Heart left ventricle (tissue), 16 donors: ENCODE measurements at regions of chr1 and their contacts with region 1.

Region 1: GRCh38 chr1:236603991-236604904 is at the start of gene HEATR1:
- DNase-seq: peak; percentile 95 to 96 (median 95)
- ATAC-seq: peak; percentile 93 to 99 (median 98)
- H3K4me3 ChIP-seq: peak within 1 kb of the TSS; percentile 50 to 96 (median 80)
- H3K27ac ChIP-seq: peak within 1 kb of the TSS in 11 of 12 donors; percentile 71 to 90 (median 85)
- H3K4me1 ChIP-seq: peaks cover 0 to 23% (median 13%) of the 10 kb centered on the region in 12 donors
- H3K27me3 ChIP-seq: no peaks in the 10 kb centered on the region
- CTCF ChIP-seq: no peak
- POLR2A ChIP-seq: peak in 1 of 2 donors; percentile 55
- total RNA-seq, gene HEATR1: 6.6 to 17.2 (median 11.8) TPM

Region 2: GRCh38 chr1:236795035-236795756 is 190.9 kb after region 1 on chr1 and contains the start of gene MTR:
- intact Hi-C with region 1: loop called in 6 of 10 experiments (anchors 5 to 10 kb)
- DNase-seq: peak; percentile 98 to 99 (median 98)
- ATAC-seq: peak; percentile 99
- H3K4me3 ChIP-seq: peak within 1 kb of the TSS; percentile 71 to 99 (median 84)
- H3K27ac ChIP-seq: peak within 1 kb of the TSS; percentile 67 to 97 (median 92)
- H3K4me1 ChIP-seq: peaks cover 0 to 38% (median 24%) of the 10 kb centered on the region in 12 donors
- H3K27me3 ChIP-seq: no peaks in the 10 kb centered on the region
- CTCF ChIP-seq: no peak
- POLR2A ChIP-seq: peak; percentile 88 to 96
- total RNA-seq, gene MTR: 30.8 to 84.2 (median 51.4) TPM

Region 3: DNA sequence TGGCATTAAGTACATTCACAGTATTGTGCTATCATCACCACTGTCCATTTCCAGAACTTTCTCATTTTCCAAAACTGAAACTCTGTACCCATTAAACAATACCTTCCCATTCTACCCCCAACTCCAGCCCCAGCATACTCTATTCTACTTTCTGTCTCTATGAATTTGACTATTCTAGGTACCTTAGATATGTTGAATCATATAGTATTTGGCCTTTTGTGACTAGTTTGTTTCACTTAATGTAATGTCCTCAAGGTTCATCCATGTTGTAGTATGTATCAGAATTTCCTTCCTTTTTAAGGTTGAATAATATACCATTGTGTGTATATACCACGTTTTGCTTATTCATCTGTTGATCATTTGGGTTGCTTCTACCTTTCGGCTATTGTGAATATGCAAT is 202.4 kb after region 1 on chr1:
- intact Hi-C with region 1: no loop called
- DNase-seq: no peak
- ATAC-seq: no peak
- H3K4me3 ChIP-seq: no peak overlapping the region
- H3K27ac ChIP-seq: no peak overlapping the region
- H3K4me1 ChIP-seq: peaks cover 0 to 41% (median 13%) of the 10 kb centered on the region in 12 donors
- H3K27me3 ChIP-seq: no peaks in the 10 kb centered on the region
- CTCF ChIP-seq: no peak
- POLR2A ChIP-seq: no peak

Region 4: DNA sequence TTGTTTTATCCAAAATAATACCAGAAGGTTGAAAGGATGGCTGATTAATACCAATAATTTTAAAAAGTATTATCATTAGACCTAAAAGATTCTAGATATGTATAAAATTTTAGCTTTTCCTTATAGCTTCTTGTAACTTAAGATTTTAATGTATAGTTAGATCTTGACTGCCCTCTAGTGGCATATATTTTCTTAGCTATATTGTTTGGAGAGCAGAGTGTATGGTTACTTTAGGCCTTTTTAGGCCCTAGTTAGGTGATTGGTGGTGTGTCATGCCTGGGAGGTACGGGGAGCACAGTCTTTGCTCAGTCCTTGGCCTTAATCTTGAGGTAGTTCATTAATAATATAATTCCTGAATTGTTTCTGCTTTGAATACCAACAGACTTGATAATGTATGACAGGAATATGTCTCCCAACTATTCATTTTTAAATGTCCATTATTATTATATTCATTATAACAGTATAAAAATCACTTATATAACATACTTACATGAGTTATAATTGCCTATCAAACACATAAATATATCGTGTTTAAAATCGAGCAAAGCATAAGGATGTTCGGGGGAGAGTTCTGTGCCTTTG is 958.1 kb after region 1 on chr1:
- intact Hi-C with region 1: loop called in 1 of 10 experiments (anchors 10 kb)
- DNase-seq: no peak
- ATAC-seq: no peak
- H3K4me3 ChIP-seq: no peak overlapping the region
- H3K27ac ChIP-seq: no peak overlapping the region
- H3K4me1 ChIP-seq: peaks cover 0 to 40% (median 4%) of the 10 kb centered on the region in 12 donors
- H3K27me3 ChIP-seq: no peaks in the 10 kb centered on the region
- CTCF ChIP-seq: peak; percentile 26 to 66 (median 53)
- POLR2A ChIP-seq: no peak